ENCODE measurements at regions of chr2 and their contacts with region 1.

Region 1: DNA sequence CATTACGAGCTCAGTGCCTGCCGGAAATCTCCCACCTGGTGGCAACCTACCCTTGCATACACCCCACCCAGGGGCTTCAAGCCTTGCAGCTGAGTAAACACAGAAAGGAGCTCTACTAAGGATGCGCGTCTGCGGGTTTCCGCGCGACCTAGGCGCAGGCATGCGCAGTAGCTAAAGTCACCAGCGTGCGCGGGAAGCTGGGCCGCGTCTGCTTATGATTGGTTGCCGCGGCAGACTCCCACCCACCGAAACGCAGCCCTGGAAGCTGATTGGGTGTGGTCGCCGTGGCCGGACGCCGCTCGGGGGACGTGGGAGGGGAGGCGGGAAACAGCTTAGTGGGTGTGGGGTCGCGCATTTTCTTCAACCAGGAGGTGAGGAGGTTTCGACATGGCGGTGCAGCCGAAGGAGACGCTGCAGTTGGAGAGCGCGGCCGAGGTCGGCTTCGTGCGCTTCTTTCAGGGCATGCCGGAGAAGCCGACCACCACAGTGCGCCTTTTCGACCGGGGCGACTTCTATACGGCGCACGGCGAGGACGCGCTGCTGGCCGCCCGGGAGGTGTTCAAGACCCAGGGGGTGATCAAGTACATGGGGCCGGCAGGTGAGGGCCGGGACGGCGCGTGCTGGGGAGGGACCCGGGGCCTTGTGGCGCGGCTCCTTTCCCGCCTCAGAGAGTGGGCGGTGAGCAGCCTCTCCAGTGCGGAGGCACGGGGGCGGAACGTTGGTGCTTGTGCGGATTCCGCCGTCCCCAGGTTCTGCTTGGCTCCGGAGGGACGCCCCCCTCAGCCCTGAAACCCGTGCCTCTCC is at the start of gene MSH2:
- DNase-seq: peak; percentile 78 to 96 (median 88)
- ATAC-seq: peak; percentile 91
- H3K4me3 ChIP-seq: peak within 1 kb of the TSS; percentile 92
- H3K4me3 Mint-ChIP-seq: peak within 1 kb of the TSS; percentile 99
- H3K27ac ChIP-seq: peak within 1 kb of the TSS in 1 of 2 donors; percentile 74
- H3K27ac Mint-ChIP-seq: peak within 1 kb of the TSS; percentile 93
- H3K4me1 ChIP-seq: peaks cover 23% of the 10 kb centered on the region
- H3K4me1 Mint-ChIP-seq: peaks cover 43% of the 10 kb centered on the region
- H3K27me3 ChIP-seq: no peaks in the 10 kb centered on the region
- H3K27me3 Mint-ChIP-seq: no peaks in the 10 kb centered on the region
- CTCF ChIP-seq: no peak
- total RNA-seq, gene MSH2: 7.1 to 8.2 TPM

Region 2: GRCh38 chr2:46915811-46916630 is 487.0 kb before region 1 on chr2:
- CTCF ChIA-PET with region 1: no interaction called
- POLR2A ChIA-PET with region 1: no interaction called
- intact Hi-C with region 1: loop called in 1 of 2 experiments (anchors 5 kb)
- DNase-seq: peak; percentile 54 to 92 (median 74)
- ATAC-seq: peak; percentile 85
- H3K4me3 ChIP-seq: peak overlapping the region; percentile 80
- H3K4me3 Mint-ChIP-seq: peak overlapping the region; percentile 82
- H3K27ac ChIP-seq: peak overlapping the region; percentile 74 to 87
- H3K27ac Mint-ChIP-seq: peak overlapping the region; percentile 86
- H3K4me1 ChIP-seq: peaks cover 41% of the 10 kb centered on the region
- H3K4me1 Mint-ChIP-seq: peaks cover 65% of the 10 kb centered on the region
- H3K27me3 ChIP-seq: no peaks in the 10 kb centered on the region
- H3K27me3 Mint-ChIP-seq: no peaks in the 10 kb centered on the region
- CTCF ChIP-seq: no peak

Region 3: DNA sequence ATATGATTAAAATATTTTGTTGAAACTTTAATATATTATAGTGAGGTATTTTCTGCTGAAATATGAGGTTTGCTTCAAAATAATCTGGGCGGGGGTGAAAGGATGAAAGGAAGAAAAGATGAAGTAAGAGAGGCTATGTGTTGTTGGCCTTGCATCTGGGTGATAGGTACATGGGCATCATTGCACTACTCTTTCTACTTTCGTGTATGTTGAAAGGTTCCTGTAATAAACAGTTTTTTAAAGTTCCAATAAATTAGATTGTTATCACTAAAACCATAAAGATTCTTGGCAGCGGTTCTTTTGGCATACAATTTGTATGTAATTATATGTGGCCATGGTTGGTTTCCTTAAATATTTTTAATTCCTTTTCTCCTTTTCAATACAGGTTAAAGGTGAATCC is 23.6 kb before region 1 on chr2:
- CTCF ChIA-PET with region 1: no interaction called
- POLR2A ChIA-PET with region 1: no interaction called
- intact Hi-C with region 1: no loop called
- DNase-seq: no peak
- ATAC-seq: no peak
- H3K4me3 ChIP-seq: no peak overlapping the region
- H3K4me3 Mint-ChIP-seq: no peak overlapping the region
- H3K27ac ChIP-seq: no peak overlapping the region
- H3K27ac Mint-ChIP-seq: no peak overlapping the region
- H3K4me1 ChIP-seq: no peaks in the 10 kb centered on the region
- H3K4me1 Mint-ChIP-seq: no peaks in the 10 kb centered on the region
- H3K27me3 ChIP-seq: peaks cover 0 to 6% of the 10 kb centered on the region in 2 experiments
- H3K27me3 Mint-ChIP-seq: peaks cover 8% of the 10 kb centered on the region
- CTCF ChIP-seq: no peak

Region 4: GRCh38 chr2:47520825-47521665 is 118.0 kb after region 1 on chr2:
- CTCF ChIA-PET with region 1: no interaction called
- POLR2A ChIA-PET with region 1: no interaction called
- intact Hi-C with region 1: loop called in 1 of 2 experiments (anchors 1 kb)
- DNase-seq: peak; percentile 51 to 89 (median 68)
- ATAC-seq: peak; percentile 92
- H3K4me3 ChIP-seq: peak overlapping the region; percentile 59
- H3K4me3 Mint-ChIP-seq: peak overlapping the region; percentile 93
- H3K27ac ChIP-seq: no peak overlapping the region
- H3K27ac Mint-ChIP-seq: peak overlapping the region; percentile 77
- H3K4me1 ChIP-seq: peaks cover 18% of the 10 kb centered on the region
- H3K4me1 Mint-ChIP-seq: peaks cover 11% of the 10 kb centered on the region
- H3K27me3 ChIP-seq: no peaks in the 10 kb centered on the region
- H3K27me3 Mint-ChIP-seq: no peaks in the 10 kb centered on the region
- CTCF ChIP-seq: peak; percentile 60

Region 5: GRCh38 chr2:48433682-48434081 is 1030.7 kb after region 1 on chr2:
- CTCF ChIA-PET with region 1: no interaction called
- POLR2A ChIA-PET with region 1: no interaction called
- intact Hi-C with region 1: loop called in 1 of 2 experiments (anchors 10 kb)
- DNase-seq: peak in 2 of 14 experiments; percentile 37 to 38
- ATAC-seq: no peak
- H3K4me3 ChIP-seq: no peak overlapping the region
- H3K4me3 Mint-ChIP-seq: no peak overlapping the region
- H3K27ac ChIP-seq: no peak overlapping the region
- H3K27ac Mint-ChIP-seq: no peak overlapping the region
- H3K4me1 ChIP-seq: no peaks in the 10 kb centered on the region
- H3K4me1 Mint-ChIP-seq: no peaks in the 10 kb centered on the region
- H3K27me3 ChIP-seq: no peaks in the 10 kb centered on the region
- H3K27me3 Mint-ChIP-seq: no peaks in the 10 kb centered on the region
- CTCF ChIP-seq: no peak

Region 6: GRCh38 chr2:48749291-48750127 is 1346.5 kb after region 1 on chr2:
- CTCF ChIA-PET with region 1: no interaction called
- POLR2A ChIA-PET with region 1: no interaction called
- intact Hi-C with region 1: no loop called
- DNase-seq: no peak
- ATAC-seq: no peak
- H3K4me3 ChIP-seq: no peak overlapping the region
- H3K4me3 Mint-ChIP-seq: no peak overlapping the region
- H3K27ac ChIP-seq: no peak overlapping the region
- H3K27ac Mint-ChIP-seq: no peak overlapping the region
- H3K4me1 ChIP-seq: no peaks in the 10 kb centered on the region
- H3K4me1 Mint-ChIP-seq: no peaks in the 10 kb centered on the region
- H3K27me3 ChIP-seq: peaks cover 0 to 13% of the 10 kb centered on the region in 2 experiments
- H3K27me3 Mint-ChIP-seq: peaks cover 26% of the 10 kb centered on the region
- CTCF ChIP-seq: no peak

Measured in CD4-positive, alpha-beta T cell (primary cell).